HepG2 (cell line): ENCODE measurements at regions of chr9 and their contacts with region 1.

Region 1: DNA sequence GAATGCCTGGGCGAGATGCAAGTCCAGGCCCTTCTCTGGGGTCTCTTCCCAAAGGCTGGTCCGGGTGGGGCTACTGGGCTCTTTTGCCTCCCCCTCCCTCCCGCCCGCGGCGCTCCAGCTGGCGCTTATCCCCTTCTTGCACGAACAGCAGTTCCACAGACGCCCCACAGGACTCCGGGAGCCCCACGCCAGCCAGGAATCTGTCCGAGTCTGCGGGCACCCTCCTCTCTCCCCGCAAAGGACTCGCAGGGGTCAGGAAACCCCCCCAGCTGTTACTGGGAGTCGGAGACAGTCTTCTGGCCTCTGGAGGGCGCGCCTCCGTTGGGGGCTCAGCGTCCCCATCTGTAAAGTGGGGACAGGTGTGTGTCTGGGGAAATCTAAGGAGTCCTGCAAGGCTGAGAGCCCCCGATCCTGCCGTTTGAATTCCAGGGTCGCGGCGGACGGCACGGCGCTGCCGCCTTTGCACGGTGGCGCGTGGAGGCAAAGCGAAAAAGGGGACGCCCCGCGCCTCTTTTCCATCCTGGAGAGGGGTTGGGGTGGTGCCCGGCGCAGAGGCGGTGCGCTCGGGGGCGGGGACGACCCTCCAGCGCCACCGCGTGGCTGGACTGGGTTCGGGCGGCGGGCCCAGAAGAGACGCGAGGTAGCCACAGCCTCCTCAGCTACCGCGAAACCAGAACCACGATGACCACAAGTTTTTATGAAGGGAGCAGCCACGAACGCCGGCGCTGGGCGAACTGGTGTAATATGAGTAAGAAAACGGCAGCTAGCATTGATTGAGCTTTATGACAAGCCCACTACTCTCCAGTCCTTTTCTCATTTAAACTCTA is 2.9 kb upstream of the CCIN start:
- DNase-seq: peak; percentile 57
- ATAC-seq: peak; percentile 94
- H3K4me3 ChIP-seq: peak overlapping the region in 1 of 3 experiments; percentile 54; a peak in 3 of 6 replicates
- H3K27ac ChIP-seq: no peak overlapping the region
- H3K4me1 ChIP-seq: peaks cover 9% of the 10 kb centered on the region; the same call in 1 of the 2 replicates
- H3K27me3 ChIP-seq: peaks cover 6 to 40% of the 10 kb centered on the region in 2 experiments; a peak in 4 of 5 replicates
- CTCF ChIP-seq: peak; percentile 95
- EP300 ChIP-seq: no peak
- POLR2A ChIP-seq: no peak
- RAD21 ChIP-seq: peak; percentile 93

Region 2: GRCh38 chr9:35954942-35955546 is 211.3 kb before region 1 on chr9:
- CTCF ChIA-PET with region 1: interaction called, 3 read pairs
- POLR2A ChIA-PET with region 1: no interaction called
- in situ Hi-C with region 1: no loop called
- intact Hi-C with region 1: loop called (anchors 5 kb)
- DNase-seq: peak; percentile 56
- ATAC-seq: peak; percentile 78
- H3K4me3 ChIP-seq: no peak overlapping the region
- H3K27ac ChIP-seq: no peak overlapping the region
- H3K4me1 ChIP-seq: no peaks in the 10 kb centered on the region
- H3K27me3 ChIP-seq: peaks cover 0 to 8% of the 10 kb centered on the region in 2 experiments; a peak in 3 of 5 replicates
- CTCF ChIP-seq: peak; percentile 85
- EP300 ChIP-seq: no peak
- POLR2A ChIP-seq: no peak
- RAD21 ChIP-seq: no peak

Region 3: DNA sequence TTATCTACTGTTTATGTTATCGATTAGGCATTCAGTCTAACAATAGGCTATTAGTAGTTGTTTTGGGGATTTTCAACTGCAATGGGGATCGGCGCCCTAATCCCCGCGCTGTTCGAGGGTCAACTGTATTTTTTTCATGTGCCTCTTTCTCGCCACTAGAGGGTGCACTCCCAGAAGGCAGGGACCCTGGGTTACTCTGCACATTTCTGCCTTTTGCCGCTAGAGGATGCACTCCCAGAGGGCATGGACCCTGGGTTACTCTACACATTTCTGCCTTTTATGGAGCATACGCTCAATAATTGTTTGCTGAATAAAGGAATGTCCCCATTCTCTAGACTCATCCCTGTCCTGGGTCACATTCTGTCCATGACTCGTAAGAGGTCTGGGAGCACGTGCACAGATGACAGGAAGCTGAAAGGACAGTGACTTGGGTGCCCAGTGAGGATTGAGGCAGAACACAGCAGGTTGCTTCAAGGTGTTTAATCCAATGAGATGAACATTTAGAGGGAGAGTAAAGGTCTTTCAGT is 157.5 kb before region 1 on chr9:
- CTCF ChIA-PET with region 1: interaction called, 13 read pairs
- POLR2A ChIA-PET with region 1: no interaction called
- in situ Hi-C with region 1: no loop called
- intact Hi-C with region 1: loop called (anchors 5 kb)
- DNase-seq: peak; percentile 74
- ATAC-seq: peak; percentile 97
- H3K4me3 ChIP-seq: no peak overlapping the region
- H3K27ac ChIP-seq: no peak overlapping the region
- H3K4me1 ChIP-seq: peaks cover 4% of the 10 kb centered on the region; the same call in 1 of the 2 replicates
- H3K27me3 ChIP-seq: peaks cover 0 to 2% of the 10 kb centered on the region in 2 experiments; a peak in 1 of 5 replicates
- CTCF ChIP-seq: peak; percentile 97
- EP300 ChIP-seq: no peak
- POLR2A ChIP-seq: no peak
- RAD21 ChIP-seq: peak; percentile 73

Region 4: GRCh38 chr9:36102742-36103495 is 63.4 kb before region 1 on chr9:
- CTCF ChIA-PET with region 1: interaction called, 40 read pairs
- POLR2A ChIA-PET with region 1: no interaction called
- in situ Hi-C with region 1: loop called (anchors 5 kb)
- intact Hi-C with region 1: loop called (anchors 1 kb)
- DNase-seq: peak; percentile 73
- ATAC-seq: peak; percentile 99
- H3K4me3 ChIP-seq: no peak overlapping the region
- H3K27ac ChIP-seq: no peak overlapping the region
- H3K4me1 ChIP-seq: peaks cover 4% of the 10 kb centered on the region; the same call in 1 of the 2 replicates
- H3K27me3 ChIP-seq: no peaks in the 10 kb centered on the region
- CTCF ChIP-seq: peak; percentile 89
- EP300 ChIP-seq: no peak
- POLR2A ChIP-seq: no peak
- RAD21 ChIP-seq: peak; percentile 44; the same call in 1 of the 2 replicates